Panc1 (cell line): ENCODE measurements at regions of chr15 and their contacts with region 1.

Region 1: GRCh38 chr15:51992976-51993375 is 21.4 kb upstream of the LEO1 start:
- DNase-seq: no peak
- ATAC-seq: no peak
- H3K4me3 ChIP-seq: no peak overlapping the region
- H3K27ac ChIP-seq: no peak overlapping the region
- H3K4me1 ChIP-seq: no peaks in the 10 kb centered on the region
- H3K27me3 ChIP-seq: no peaks in the 10 kb centered on the region
- CTCF ChIP-seq: no peak

Region 2: GRCh38 chr15:51947124-51947523 is 45.9 kb before region 1 on chr15:
- CTCF ChIA-PET with region 1: no interaction called
- POLR2A ChIA-PET with region 1: interaction called, 15 read pairs
- in situ Hi-C with region 1: no loop called
- intact Hi-C with region 1: no loop called
- DNase-seq: no peak
- ATAC-seq: no peak
- H3K4me3 ChIP-seq: no peak overlapping the region
- H3K27ac ChIP-seq: no peak overlapping the region
- H3K4me1 ChIP-seq: no peaks in the 10 kb centered on the region
- H3K27me3 ChIP-seq: no peaks in the 10 kb centered on the region
- CTCF ChIP-seq: no peak

Region 3: DNA sequence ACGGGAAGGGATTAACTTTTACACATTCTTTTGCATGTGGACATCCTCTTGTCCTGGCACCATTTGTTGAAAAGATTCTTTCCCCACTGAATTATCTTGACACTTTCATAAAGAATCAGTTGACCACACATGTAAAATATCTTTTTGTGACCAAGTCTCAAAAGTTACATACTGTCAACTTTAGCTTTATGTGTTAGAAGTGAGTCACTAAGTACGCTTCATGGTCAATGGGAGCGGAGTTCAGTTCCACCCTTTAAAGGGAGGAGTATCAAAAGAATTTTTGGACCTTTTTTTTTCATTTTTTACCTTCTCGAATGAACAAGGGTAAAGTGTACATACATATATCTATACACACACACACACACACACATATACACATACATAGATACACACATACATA is 61.4 kb after region 1 on chr15:
- CTCF ChIA-PET with region 1: no interaction called
- POLR2A ChIA-PET with region 1: no interaction called
- in situ Hi-C with region 1: no loop called
- intact Hi-C with region 1: no loop called
- DNase-seq: no peak
- ATAC-seq: peak; percentile 54; the same call in 1 of the 2 replicates
- H3K4me3 ChIP-seq: no peak overlapping the region
- H3K27ac ChIP-seq: peak overlapping the region; percentile 76
- H3K4me1 ChIP-seq: peaks cover 32% of the 10 kb centered on the region
- H3K27me3 ChIP-seq: no peaks in the 10 kb centered on the region
- CTCF ChIP-seq: no peak

Region 4: GRCh38 chr15:52183562-52184173 is 190.7 kb after region 1 on chr15:
- CTCF ChIA-PET with region 1: no interaction called
- POLR2A ChIA-PET with region 1: no interaction called
- in situ Hi-C with region 1: no loop called
- intact Hi-C with region 1: no loop called
- DNase-seq: peak; percentile 36
- ATAC-seq: no peak
- H3K4me3 ChIP-seq: no peak overlapping the region
- H3K27ac ChIP-seq: no peak overlapping the region
- H3K4me1 ChIP-seq: peaks cover 4% of the 10 kb centered on the region
- H3K27me3 ChIP-seq: no peaks in the 10 kb centered on the region
- CTCF ChIP-seq: peak; percentile 89